ENCODE measurements at regions of chr10 and their contacts with region 1.

Region 1: DNA sequence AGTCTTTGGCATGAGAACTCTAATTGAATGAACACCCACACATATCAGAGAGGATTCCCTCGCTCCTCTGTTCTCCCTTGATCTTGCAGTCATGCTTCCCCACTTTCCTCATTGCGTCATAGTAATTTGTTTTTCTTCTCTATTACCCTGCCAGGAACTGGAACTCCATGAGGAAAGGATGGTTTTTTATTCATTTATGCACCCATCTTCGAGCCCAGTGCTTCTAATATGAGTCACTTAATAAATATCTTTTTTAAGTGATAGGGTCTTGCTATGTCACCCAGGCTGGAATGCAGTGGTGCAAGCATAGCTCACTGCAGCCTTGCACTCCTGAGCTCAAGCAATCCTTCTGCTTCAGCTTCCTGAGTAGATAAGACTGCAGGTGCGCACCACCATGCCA is 83.5 kb downstream of the OTUD1 start:
- DNase-seq: no peak
- ATAC-seq: peak in 1 of 4 donors; percentile 16
- H3K4me3 ChIP-seq: no peak overlapping the region
- H3K27ac ChIP-seq: no peak overlapping the region
- H3K4me1 ChIP-seq: no peaks in the 10 kb centered on the region
- H3K27me3 ChIP-seq: no peaks in the 10 kb centered on the region
- CTCF ChIP-seq: no peak

Region 2: DNA sequence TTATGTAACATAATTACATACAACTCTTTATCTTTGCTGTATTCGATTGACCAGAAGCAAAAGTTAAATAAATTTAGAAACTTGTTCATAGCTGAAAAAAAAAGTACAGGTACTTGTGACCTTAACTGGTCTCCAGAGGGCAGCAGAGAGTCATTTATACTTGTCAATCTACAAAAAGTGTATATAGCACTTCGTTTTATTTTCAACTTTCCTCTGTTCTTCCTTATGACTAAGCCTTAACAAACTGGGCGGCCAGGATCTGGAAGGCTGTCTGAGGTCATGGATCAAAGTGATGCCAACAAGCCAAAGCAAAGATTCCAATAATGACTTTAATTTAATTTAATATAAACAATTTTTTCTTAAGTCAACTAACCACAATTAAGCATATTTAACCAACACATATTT is 207.5 kb before region 1 on chr10:
- intact Hi-C with region 1: loop called in 1 of 3 experiments (anchors 5 kb)
- DNase-seq: peak in 3 of 6 donors; percentile 29 to 53 (median 52)
- ATAC-seq: peak; percentile 76 to 91 (median 86)
- H3K4me3 ChIP-seq: no peak overlapping the region
- H3K27ac ChIP-seq: no peak overlapping the region
- H3K4me1 ChIP-seq: no peaks in the 10 kb centered on the region
- H3K27me3 ChIP-seq: no peaks in the 10 kb centered on the region
- CTCF ChIP-seq: peak; percentile 31 to 63 (median 56)

Region 3: DNA sequence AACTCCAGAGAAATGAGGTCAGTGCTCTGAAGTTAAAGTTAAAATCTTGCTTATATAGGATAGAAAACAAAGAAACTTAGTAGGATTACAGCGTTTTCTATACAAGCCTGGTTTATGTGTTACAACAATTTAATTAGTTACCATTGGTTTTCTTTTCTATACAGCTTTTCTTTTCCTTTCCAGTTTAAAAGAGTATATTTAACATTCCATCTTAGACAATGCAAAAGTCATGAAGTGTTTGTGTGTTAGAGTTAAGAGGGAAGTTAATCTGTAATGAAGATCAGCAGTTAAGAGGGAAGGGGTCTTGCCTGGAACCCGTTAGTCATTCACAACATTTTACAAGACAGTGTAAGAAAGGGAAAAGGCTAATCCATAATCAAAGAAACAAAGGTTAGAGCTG is 254.8 kb after region 1 on chr10:
- intact Hi-C with region 1: no loop called
- DNase-seq: no peak
- ATAC-seq: no peak
- H3K4me3 ChIP-seq: no peak overlapping the region
- H3K27ac ChIP-seq: no peak overlapping the region
- H3K4me1 ChIP-seq: no peaks in the 10 kb centered on the region
- H3K27me3 ChIP-seq: no peaks in the 10 kb centered on the region
- CTCF ChIP-seq: no peak

Measured in pancreas (tissue), 10 donors.